ENCODE measurements at regions of chr3 and their contacts with region 1.

Region 1: DNA sequence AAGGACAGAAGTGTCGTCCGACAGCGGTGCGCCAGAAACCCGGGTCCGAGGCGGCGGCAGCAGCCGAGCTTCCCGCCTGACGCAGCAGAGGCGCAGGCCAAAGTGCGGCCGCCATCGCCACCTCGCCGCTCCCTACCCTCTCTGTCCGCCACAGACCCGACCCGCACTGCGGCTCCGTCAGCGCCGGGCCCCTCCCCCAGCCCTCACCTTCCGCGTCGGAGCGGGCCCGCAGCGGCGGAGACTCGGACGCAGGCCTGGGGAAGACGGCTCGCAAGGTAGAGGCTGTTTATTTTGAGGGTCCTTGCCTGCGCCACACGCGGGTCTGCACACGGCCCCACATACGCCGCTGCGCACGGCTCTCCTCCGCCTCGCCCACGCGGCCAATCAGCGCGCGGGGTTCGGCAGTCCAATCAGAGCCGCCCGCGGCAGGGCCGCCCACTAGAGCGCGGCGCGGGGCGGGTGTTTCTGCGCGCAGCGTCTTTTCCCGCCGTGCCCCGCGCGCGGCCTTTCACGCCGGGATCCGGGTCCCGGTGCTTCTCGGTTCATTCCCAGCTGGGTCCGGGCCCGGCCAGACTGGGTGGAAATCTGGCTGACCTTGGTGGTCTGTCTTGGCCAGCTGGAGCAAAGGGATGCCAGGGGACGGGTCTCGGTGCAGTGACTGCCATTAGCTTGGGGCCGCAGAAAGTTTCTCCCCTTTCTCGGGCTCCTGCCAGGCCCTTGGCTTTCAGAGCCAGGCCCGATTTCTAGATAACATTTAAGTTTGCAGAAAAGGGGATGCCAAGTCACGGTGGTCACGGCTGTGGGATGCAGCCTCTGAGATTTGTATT is at the start of gene CNBP:
- DNase-seq: peak; percentile 95
- H3K4me3 Mint-ChIP-seq: peak within 1 kb of the TSS; percentile 97
- H3K27ac Mint-ChIP-seq: peak within 1 kb of the TSS; percentile 96
- H3K4me1 Mint-ChIP-seq: peaks cover 27% of the 10 kb centered on the region
- H3K27me3 Mint-ChIP-seq: no peaks in the 10 kb centered on the region
- total RNA-seq, gene CNBP: 342 to 348 TPM

Region 2: GRCh38 chr3:128725932-128726690 is 457.7 kb before region 1 on chr3 and contains the start of gene RAB7A:
- CTCF ChIA-PET with region 1: no interaction called
- POLR2A ChIA-PET with region 1: no interaction called
- intact Hi-C with region 1: loop called (anchors 5 kb)
- DNase-seq: peak; percentile 99
- H3K4me3 Mint-ChIP-seq: peak within 1 kb of the TSS; percentile 93
- H3K27ac Mint-ChIP-seq: peak within 1 kb of the TSS; percentile 87
- H3K4me1 Mint-ChIP-seq: peaks cover 50% of the 10 kb centered on the region
- H3K27me3 Mint-ChIP-seq: no peaks in the 10 kb centered on the region
- total RNA-seq, gene RAB7A: 264 to 272 TPM

Region 3: GRCh38 chr3:128784232-128784631 is 399.6 kb before region 1 on chr3:
- CTCF ChIA-PET with region 1: no interaction called
- POLR2A ChIA-PET with region 1: no interaction called
- intact Hi-C with region 1: no loop called
- DNase-seq: peak; percentile 75
- H3K4me3 Mint-ChIP-seq: no peak overlapping the region
- H3K27ac Mint-ChIP-seq: peak overlapping the region; percentile 52
- H3K4me1 Mint-ChIP-seq: peaks cover 92% of the 10 kb centered on the region
- H3K27me3 Mint-ChIP-seq: no peaks in the 10 kb centered on the region

Region 4: DNA sequence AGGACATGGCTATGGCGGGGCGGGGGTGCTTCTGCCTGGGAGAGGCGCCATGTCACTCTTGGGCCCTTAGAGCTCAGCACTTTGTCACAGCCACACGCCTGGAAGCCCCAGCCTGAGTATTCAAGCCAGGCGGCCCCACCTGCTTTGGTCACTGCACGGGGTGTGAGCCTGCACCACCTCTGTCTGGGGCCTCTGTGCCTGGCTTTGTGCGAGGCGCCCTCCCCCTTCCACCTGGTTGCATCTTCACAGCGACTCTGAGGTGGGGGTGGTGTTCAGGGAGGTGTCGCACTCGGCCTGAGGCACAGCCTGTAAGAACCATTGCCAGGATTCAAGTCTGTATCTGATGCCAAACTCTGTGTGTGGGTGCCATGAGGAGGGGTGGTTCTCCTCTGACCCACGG is 280.3 kb before region 1 on chr3:
- CTCF ChIA-PET with region 1: no interaction called
- POLR2A ChIA-PET with region 1: no interaction called
- intact Hi-C with region 1: no loop called
- DNase-seq: no peak
- H3K4me3 Mint-ChIP-seq: no peak overlapping the region
- H3K27ac Mint-ChIP-seq: no peak overlapping the region
- H3K4me1 Mint-ChIP-seq: no peaks in the 10 kb centered on the region
- H3K27me3 Mint-ChIP-seq: no peaks in the 10 kb centered on the region

Region 5: GRCh38 chr3:129026728-129027543 is 156.8 kb before region 1 on chr3:
- CTCF ChIA-PET with region 1: interaction called, 3 read pairs
- POLR2A ChIA-PET with region 1: interaction called, 3 read pairs
- intact Hi-C with region 1: loop called (anchors 5 kb)
- DNase-seq: peak; percentile 96
- H3K4me3 Mint-ChIP-seq: peak overlapping the region; percentile 73
- H3K27ac Mint-ChIP-seq: peak overlapping the region; percentile 83
- H3K4me1 Mint-ChIP-seq: peaks cover 9% of the 10 kb centered on the region
- H3K27me3 Mint-ChIP-seq: no peaks in the 10 kb centered on the region

Region 6: DNA sequence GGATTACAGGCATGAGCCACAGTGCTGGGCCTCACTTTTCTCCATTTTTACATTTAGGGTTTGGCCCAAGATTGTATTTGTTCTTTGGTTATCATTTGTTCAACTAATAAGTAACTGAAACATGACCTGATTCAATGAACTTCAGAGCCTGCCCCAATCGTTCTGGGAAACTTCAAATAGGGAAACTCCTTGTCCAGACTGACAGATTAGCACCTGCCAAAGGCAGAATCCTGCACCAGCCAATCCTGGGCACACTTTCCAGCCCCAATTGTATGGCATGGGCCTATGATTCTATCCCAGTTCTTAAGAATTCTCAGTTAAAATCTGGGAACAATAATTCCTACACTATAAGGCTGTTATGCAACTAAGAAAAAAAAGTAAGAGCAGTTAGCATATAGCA is 43.9 kb before region 1 on chr3:
- CTCF ChIA-PET with region 1: no interaction called
- POLR2A ChIA-PET with region 1: no interaction called
- intact Hi-C with region 1: no loop called
- DNase-seq: no peak
- H3K4me3 Mint-ChIP-seq: no peak overlapping the region
- H3K27ac Mint-ChIP-seq: no peak overlapping the region
- H3K4me1 Mint-ChIP-seq: no peaks in the 10 kb centered on the region
- H3K27me3 Mint-ChIP-seq: no peaks in the 10 kb centered on the region

Region 7: GRCh38 chr3:129195731-129196256 is 12.0 kb after region 1 on chr3:
- CTCF ChIA-PET with region 1: no interaction called
- POLR2A ChIA-PET with region 1: no interaction called
- intact Hi-C with region 1: no loop called
- DNase-seq: peak; percentile 37
- H3K4me3 Mint-ChIP-seq: no peak overlapping the region
- H3K27ac Mint-ChIP-seq: no peak overlapping the region
- H3K4me1 Mint-ChIP-seq: peaks cover 7% of the 10 kb centered on the region
- H3K27me3 Mint-ChIP-seq: no peaks in the 10 kb centered on the region

Region 8: DNA sequence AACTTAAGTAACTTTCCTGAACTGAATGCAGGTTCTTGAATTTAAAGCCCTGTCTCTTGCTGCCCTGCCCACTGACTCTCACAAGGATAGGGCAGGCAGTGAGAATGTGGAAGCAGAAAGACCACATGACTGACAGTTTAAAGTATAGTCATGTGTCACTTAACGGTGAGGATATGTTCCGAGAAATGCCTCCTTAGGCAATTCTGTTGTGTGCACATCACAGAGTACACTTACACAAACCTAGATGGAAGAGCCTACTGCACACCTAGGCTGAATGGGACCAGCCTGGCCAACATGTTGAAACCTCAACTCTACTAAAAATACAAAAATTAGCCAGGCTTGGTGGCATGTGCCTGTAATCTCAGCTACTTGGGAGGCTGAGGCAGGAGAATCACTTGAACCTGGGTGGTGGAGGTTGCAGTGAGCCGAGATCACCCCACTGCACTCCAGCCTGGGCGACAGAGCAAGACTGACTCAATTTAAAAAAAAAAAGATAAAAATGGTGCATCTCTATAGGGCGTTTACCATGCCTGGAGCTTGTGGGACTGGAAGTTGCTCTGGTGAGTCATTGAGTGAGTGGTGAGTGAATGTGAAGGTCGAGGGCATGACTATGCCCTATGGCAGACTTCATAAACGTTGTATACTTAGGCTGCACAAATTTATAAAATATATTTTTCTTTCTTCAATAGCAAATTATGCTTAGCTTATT is 46.7 kb after region 1 on chr3:
- CTCF ChIA-PET with region 1: no interaction called
- POLR2A ChIA-PET with region 1: no interaction called
- intact Hi-C with region 1: loop called (anchors 1 kb)
- DNase-seq: peak; percentile 63
- H3K4me3 Mint-ChIP-seq: no peak overlapping the region
- H3K27ac Mint-ChIP-seq: peak overlapping the region; percentile 66
- H3K4me1 Mint-ChIP-seq: peaks cover 25% of the 10 kb centered on the region
- H3K27me3 Mint-ChIP-seq: no peaks in the 10 kb centered on the region

Region 9: GRCh38 chr3:129305592-129306091 is 121.9 kb after region 1 on chr3:
- CTCF ChIA-PET with region 1: no interaction called
- POLR2A ChIA-PET with region 1: no interaction called
- intact Hi-C with region 1: loop called (anchors 5 kb)
- DNase-seq: peak; percentile 59
- H3K4me3 Mint-ChIP-seq: no peak overlapping the region
- H3K27ac Mint-ChIP-seq: peak overlapping the region; percentile 4
- H3K4me1 Mint-ChIP-seq: peaks cover 32% of the 10 kb centered on the region
- H3K27me3 Mint-ChIP-seq: no peaks in the 10 kb centered on the region

Measured in activated CD4-positive, alpha-beta memory T cell treated with anti-CD3 and anti-CD28 coated beads for 36 hours (primary cell).